ENCODE measurements at regions of chr2 and their contacts with region 1.

Region 1: DNA sequence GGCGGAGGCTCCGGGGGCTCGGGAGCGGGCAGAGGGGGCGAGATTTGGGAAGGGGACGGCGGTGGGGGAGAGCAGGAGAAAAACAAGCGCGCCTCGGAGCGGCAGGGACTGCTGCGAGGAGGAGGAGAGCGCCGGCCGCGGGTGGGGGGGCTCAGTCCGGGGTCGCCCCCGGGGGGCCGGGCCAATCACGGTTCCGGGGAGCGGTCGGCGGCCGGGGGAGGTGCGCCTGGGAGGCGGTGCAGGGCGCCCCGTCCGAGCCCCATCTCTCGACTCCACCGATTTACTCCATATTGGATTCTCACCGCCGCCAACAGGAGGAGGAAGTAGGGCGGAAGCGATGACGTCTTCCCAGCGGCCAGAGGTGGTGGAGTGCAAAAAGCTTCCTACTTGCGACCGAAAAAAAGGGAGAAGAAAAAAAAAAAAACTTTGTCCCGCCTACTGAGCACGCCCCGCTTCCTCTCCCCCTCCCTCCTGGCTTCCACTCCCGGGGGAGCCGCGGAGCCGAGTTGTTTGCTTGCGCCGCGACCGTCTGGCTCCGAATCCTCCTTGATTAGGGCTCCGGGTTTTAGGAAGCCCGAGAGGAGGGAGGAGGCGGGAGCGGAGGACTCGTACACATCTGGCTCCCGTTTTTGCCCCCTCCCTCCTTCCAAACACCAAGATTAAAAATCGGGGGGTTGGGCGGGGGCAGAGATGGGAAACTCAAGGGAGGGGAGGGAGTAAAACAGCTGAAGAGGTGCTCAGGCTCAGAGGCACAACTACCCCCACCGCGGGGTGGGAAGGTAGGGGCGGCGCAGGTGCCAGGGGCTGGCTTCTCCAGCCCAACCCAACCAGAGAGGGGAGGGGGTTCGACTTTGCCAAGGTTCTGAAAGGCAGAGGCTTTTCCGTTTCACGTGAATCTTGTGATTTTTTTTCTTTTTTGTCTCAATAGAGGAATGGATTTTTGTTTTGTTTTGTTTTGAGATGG is at the start of gene SPRED2:
- DNase-seq: peak; percentile 95 to 97 (median 97)
- ATAC-seq: peak; percentile 55 to 77 (median 62)
- H3K4me3 ChIP-seq: peak within 1 kb of the TSS; percentile 58 to 98 (median 89)
- H3K27ac ChIP-seq: peak within 1 kb of the TSS; percentile 88 to 98 (median 92)
- H3K4me1 ChIP-seq: peaks cover 0 to 46% (median 28%) of the 10 kb centered on the region in 12 donors
- H3K27me3 ChIP-seq: peaks cover 0 to 4% (median 0%) of the 10 kb centered on the region in 9 donors
- CTCF ChIP-seq: peak in 4 of 12 donors; percentile 17 to 41 (median 26)
- POLR2A ChIP-seq: peak in 1 of 2 donors; percentile 66
- total RNA-seq, gene SPRED2: 10.2 to 24.4 (median 17.5) TPM

Region 2: GRCh38 chr2:65064728-65065552 is 367.6 kb before region 1 on chr2:
- intact Hi-C with region 1: loop called in 1 of 10 experiments (anchors 10 kb)
- DNase-seq: peak in 4 of 5 donors; percentile 45 to 79 (median 66)
- ATAC-seq: peak; percentile 78 to 85 (median 82)
- H3K4me3 ChIP-seq: peak overlapping the region in 1 of 12 donors; percentile 12
- H3K27ac ChIP-seq: peak overlapping the region in 11 of 12 donors; percentile 6 to 87 (median 39)
- H3K4me1 ChIP-seq: peaks cover 10 to 99% (median 79%) of the 10 kb centered on the region in 12 donors
- H3K27me3 ChIP-seq: no peaks in the 10 kb centered on the region
- CTCF ChIP-seq: peak; percentile 59 to 79 (median 70)
- POLR2A ChIP-seq: no peak

Region 3: DNA sequence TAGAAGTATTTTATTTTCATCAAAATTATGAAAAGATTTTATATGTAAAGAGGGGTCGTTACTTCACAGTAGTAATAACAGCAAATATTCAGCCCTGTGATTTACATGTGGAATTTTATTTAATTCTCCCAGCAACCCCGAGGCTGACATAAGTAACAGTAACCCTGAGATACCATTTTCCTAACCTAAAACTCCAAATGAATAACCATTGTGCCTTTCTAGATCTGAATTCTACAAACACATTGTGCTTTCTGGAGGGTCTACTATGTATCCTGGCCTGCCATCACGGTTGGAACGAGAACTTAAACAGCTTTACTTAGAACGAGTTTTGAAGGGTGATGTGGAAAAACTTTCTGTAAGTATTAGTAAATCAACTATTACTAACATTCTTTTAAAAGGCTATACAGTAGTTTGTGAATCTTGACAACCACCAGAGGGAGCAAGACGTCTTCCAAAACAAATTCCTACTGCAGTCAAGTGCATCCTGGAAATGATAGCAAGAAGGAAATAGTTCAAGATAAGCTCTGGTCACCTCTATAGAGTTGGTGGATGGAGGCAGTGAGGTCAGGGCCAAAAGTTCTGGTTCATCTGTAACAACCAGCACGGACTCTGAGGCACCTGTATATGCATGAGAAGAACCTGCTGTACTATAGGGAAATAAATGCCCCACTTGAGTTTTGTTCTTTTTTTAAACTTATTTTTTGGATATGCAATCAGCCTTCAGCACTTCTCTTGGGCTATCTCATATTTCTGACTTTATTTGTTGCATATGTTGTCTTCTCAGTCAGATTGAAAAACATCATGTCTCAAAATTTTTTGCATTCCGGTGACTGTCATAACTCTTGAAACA is 167.5 kb before region 1 on chr2:
- intact Hi-C with region 1: loop called in 6 of 10 experiments (anchors 2 to 10 kb)
- DNase-seq: peak in 1 of 5 donors; percentile 40
- ATAC-seq: peak; percentile 33 to 84 (median 81)
- H3K4me3 ChIP-seq: no peak overlapping the region
- H3K27ac ChIP-seq: no peak overlapping the region
- H3K4me1 ChIP-seq: peaks cover 0 to 12% (median 0%) of the 10 kb centered on the region in 12 donors
- H3K27me3 ChIP-seq: no peaks in the 10 kb centered on the region
- CTCF ChIP-seq: peak; percentile 58 to 81 (median 70)
- POLR2A ChIP-seq: no peak

Region 4: DNA sequence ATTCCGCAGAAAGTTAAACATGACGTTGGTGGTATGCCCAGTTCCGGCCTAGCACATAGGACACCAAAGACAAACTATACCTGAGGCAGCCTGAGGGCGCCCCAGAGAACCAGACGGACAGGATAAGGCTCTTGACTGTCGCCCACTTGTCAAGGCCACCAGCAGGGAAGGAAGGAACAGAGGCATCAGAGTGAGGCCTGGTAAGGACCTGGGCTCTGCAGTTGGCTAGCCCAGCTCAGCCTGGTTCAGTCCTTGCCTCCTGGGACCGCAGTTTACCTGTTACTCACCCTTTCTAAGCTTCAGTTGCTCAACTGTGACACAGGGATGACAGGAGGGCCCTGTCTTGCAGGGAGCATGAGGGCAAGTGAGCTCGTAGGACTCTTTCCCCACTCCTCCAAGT is 122.8 kb before region 1 on chr2:
- intact Hi-C with region 1: loop called in 7 of 10 experiments (anchors 1 to 10 kb)
- DNase-seq: peak in 1 of 5 donors; percentile 31
- ATAC-seq: peak in 1 of 4 donors; percentile 3
- H3K4me3 ChIP-seq: peak overlapping the region in 1 of 12 donors; percentile 7
- H3K27ac ChIP-seq: peak overlapping the region; percentile 62 to 92 (median 78)
- H3K4me1 ChIP-seq: peaks cover 0 to 35% (median 19%) of the 10 kb centered on the region in 12 donors
- H3K27me3 ChIP-seq: no peaks in the 10 kb centered on the region
- CTCF ChIP-seq: no peak
- POLR2A ChIP-seq: no peak

Region 5: DNA sequence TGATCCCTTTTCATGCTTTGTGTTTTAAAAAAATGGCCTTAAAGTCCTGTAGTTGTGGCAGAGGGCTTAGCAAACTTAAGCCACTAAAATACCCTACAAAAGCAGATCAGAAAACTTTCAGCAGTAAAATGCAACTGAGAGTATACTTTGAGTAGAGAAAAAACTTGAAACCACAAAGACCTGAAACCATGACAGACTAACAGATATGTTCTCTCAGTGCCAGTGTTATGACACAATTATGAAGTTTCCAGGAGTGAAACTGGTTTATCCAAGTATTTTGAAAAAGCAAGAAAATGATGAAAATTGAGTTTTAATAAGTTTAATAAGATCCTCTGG is 74.6 kb before region 1 on chr2:
- intact Hi-C with region 1: loop called in 1 of 10 experiments (anchors 2 kb)
- DNase-seq: no peak
- ATAC-seq: no peak
- H3K4me3 ChIP-seq: no peak overlapping the region
- H3K27ac ChIP-seq: peak overlapping the region in 1 of 12 donors; percentile 53
- H3K4me1 ChIP-seq: peaks cover 0 to 66% (median 38%) of the 10 kb centered on the region in 12 donors
- H3K27me3 ChIP-seq: no peaks in the 10 kb centered on the region
- CTCF ChIP-seq: no peak
- POLR2A ChIP-seq: no peak

Region 6: DNA sequence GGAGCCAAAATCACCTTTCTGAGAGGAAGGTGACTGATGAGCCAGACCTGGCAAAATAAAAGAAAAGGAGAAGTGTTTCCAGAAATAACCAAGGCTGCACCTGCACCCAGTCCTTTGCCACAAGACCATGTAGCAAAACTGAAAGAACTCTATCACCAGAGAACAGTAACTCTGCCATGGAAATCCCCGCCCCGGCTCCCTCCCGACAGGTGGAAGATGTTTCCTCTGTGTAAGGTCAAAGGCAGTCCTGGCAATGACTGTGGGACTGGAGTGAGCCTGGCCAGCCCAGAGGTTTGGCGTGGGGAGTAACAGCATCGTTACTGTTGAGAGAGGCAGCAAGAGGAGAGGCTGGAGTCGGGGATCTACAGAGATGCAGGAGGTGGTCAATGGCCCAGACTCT is 42.4 kb before region 1 on chr2:
- intact Hi-C with region 1: loop called in 1 of 10 experiments (anchors 5 kb)
- DNase-seq: no peak
- ATAC-seq: peak in 1 of 4 donors; percentile 53
- H3K4me3 ChIP-seq: no peak overlapping the region
- H3K27ac ChIP-seq: no peak overlapping the region
- H3K4me1 ChIP-seq: peaks cover 0 to 65% (median 34%) of the 10 kb centered on the region in 12 donors
- H3K27me3 ChIP-seq: no peaks in the 10 kb centered on the region
- CTCF ChIP-seq: no peak
- POLR2A ChIP-seq: no peak

Region 7: GRCh38 chr2:65554765-65555591 is 122.5 kb after region 1 on chr2:
- intact Hi-C with region 1: loop called in 6 of 10 experiments (anchors 2 to 5 kb)
- DNase-seq: no peak
- ATAC-seq: peak in 1 of 4 donors; percentile 14
- H3K4me3 ChIP-seq: no peak overlapping the region
- H3K27ac ChIP-seq: no peak overlapping the region
- H3K4me1 ChIP-seq: peaks cover 0 to 8% (median 2%) of the 10 kb centered on the region in 12 donors
- H3K27me3 ChIP-seq: no peaks in the 10 kb centered on the region
- CTCF ChIP-seq: no peak
- POLR2A ChIP-seq: no peak